ENCODE measurements at regions of chr14 and their contacts with region 1.

Region 1: DNA sequence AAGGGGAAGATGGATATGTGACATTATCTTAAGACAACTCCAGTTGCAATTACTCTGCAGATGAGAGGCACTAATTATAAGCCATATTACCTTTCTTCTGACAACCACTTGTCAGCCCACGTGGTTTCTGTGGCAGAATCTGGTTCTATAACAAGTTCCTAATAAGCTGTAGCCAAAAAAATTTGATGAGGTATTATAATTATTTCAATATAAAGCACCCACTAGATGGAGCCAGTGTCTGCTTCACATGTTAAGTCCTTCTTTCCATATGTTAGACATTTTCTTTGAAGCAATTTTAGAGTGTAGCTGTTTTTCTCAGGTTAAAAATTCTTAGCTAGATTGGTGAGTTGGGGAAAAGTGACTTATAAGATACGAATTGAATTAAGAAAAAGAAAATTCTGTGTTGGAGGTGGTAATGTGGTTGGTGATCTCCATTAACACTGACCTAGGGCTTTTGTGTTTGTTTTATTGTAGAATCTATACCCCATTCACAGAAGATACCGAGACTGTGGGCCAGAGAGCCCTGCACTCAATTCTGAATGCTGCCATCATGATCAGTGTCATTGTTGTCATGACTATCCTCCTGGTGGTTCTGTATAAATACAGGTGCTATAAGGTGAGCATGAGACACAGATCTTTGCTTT is 36.9 kb downstream of the PSEN1 start:
- DNase-seq: no peak
- ATAC-seq: peak in 1 of 4 donors; percentile 48
- H3K4me3 ChIP-seq: no peak overlapping the region
- H3K27ac ChIP-seq: no peak overlapping the region
- H3K4me1 ChIP-seq: peaks cover 2% of the 10 kb centered on the region
- H3K27me3 ChIP-seq: no peaks in the 10 kb centered on the region
- CTCF ChIP-seq: peak; percentile 57

Region 2: DNA sequence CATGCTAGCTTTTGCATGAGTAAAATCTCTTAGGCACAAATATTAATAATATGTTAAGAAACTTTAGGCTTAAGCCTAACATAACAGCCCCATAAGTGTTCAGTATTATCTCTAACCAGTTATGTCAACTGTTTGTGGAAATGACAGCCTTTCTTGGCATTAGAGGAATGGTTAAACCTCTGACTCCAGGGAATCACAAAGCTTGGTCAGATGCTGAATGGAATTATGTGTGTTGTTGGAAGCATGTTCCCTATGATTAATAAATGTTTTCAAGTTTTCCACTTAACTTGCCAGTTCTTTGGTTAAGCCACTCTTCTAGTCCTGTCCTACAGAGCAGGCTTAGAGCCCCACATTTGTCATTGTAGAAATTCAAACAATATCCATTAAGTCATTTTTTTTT is 19.9 kb before region 1 on chr14:
- intact Hi-C with region 1: no loop called
- DNase-seq: no peak
- ATAC-seq: no peak
- H3K4me3 ChIP-seq: no peak overlapping the region
- H3K27ac ChIP-seq: no peak overlapping the region
- H3K4me1 ChIP-seq: no peaks in the 10 kb centered on the region
- H3K27me3 ChIP-seq: no peaks in the 10 kb centered on the region
- CTCF ChIP-seq: no peak

Region 3: GRCh38 chr14:73269729-73270531 is 96.7 kb after region 1 on chr14:
- intact Hi-C with region 1: loop called in 1 of 2 experiments (anchors 10 kb)
- DNase-seq: peak; percentile 65 to 75
- ATAC-seq: peak; percentile 70 to 80 (median 75)
- H3K4me3 ChIP-seq: peak overlapping the region; percentile 61
- H3K27ac ChIP-seq: no peak overlapping the region
- H3K4me1 ChIP-seq: peaks cover 17% of the 10 kb centered on the region
- H3K27me3 ChIP-seq: peaks cover 0 to 4% (median 0%) of the 10 kb centered on the region in 3 donors
- CTCF ChIP-seq: no peak

Region 4: DNA sequence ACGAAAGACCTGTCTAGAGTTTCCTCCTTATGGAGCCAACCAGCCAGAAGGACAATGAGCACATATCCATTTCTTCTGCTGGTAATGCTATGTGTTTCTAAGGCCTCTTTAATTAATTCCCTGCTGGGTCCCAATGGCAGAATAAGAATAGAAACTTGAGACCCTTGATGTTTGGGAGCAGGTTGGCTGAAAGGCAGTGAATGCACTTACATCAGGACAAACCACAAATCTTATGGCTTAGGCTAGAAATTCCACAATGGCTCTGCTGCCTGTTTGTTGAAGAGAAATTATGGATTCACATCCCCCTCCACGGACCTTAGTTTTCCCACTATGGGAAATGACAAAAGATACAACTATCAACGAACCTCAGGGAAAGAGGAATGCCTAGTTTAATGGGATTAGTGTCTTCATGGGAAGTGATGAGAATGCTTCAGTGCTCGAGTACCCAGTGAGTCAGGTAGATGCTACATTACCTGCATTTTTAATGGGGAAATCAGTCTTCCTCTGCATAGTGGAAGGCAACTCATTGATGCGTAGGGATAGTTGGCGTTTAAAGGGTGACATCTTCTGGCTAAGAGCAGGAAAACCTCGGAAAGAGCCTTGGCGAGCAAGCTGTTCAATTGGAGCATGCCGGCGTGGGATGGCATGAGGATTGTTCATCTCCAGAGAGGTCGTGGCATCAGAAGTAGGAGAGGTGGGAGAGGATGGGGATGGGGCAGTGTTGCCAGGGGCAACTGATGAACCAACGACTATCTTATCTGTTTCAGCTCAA is 110.6 kb after region 1 on chr14:
- intact Hi-C with region 1: loop called (anchors 10 kb)
- DNase-seq: no peak
- ATAC-seq: no peak
- H3K4me3 ChIP-seq: no peak overlapping the region
- H3K27ac ChIP-seq: no peak overlapping the region
- H3K4me1 ChIP-seq: no peaks in the 10 kb centered on the region
- H3K27me3 ChIP-seq: no peaks in the 10 kb centered on the region
- CTCF ChIP-seq: no peak

Region 5: DNA sequence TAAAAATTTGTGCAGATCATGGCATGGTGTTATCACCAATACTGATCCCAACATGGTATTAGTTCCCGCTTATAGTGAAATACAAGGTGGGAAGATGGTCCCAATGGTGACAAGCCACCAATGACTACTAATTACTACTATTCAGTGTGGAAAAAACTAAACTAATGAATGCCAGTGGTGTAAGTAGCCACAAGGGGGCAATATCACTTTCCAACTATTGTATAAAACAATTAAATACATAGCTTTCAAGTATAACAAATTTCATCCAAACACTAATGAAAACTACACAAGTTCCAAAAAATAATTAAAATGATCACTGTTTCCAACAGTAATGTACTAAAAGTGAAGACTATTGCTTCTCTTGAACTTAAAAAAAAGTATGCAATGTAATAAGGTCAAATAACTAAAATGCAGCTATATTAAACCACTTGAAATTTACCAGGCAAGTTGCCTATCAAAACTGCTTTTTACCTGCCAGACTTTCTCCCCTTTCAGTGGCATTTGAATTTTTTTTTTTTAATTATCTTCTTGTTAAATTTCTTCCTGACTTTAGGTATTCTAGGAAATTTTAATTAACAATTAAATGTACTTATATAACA is 122.1 kb after region 1 on chr14:
- intact Hi-C with region 1: no loop called
- DNase-seq: no peak
- ATAC-seq: no peak
- H3K4me3 ChIP-seq: no peak overlapping the region
- H3K27ac ChIP-seq: no peak overlapping the region
- H3K4me1 ChIP-seq: no peaks in the 10 kb centered on the region
- H3K27me3 ChIP-seq: no peaks in the 10 kb centered on the region
- CTCF ChIP-seq: peak; percentile 67

Region 6: DNA sequence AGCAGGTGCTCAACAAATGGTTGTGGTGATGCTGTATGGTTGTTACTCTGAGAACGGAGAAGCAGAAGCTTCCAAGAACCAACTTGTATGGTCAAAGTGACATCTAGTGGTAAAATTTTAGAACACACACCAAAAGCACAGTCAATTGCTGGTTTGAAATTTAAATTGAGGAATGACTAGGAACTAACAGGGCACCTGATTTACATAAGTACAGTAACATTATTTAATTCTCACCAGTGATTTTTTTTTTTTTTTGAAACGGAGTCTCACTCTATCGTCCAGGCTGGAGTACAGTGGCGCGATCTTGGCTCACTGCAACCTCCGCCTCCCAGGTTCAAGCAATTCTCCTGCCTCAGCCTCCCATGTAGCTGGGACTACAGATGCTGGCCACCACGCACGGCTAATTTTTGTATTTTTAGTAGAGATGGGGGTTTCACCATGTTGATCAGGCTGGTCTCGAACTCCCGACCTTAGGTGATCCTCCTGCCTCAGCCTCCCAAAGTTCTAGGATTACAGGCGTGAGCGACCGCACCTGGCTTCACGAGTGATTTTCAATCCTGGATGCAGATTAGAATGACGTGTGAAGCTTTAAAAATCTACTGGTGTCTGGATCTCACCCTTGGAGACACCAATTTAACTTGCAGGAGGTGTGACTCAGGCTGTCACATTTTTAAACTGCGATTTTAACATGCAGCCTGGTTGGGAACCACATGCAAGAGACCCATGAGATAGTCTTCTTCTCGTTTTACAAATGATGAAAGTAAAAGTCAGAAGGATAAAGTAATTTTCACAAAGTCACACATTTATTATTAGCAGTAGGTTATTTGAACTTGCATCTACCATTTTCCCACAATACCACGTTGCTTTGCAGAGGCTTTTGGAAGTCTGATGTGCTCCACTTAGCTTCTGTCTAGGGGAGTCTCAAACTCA is 299.2 kb after region 1 on chr14:
- intact Hi-C with region 1: loop called (anchors 5 kb)
- DNase-seq: no peak
- ATAC-seq: peak; percentile 81 to 96 (median 85)
- H3K4me3 ChIP-seq: no peak overlapping the region
- H3K27ac ChIP-seq: no peak overlapping the region
- H3K4me1 ChIP-seq: no peaks in the 10 kb centered on the region
- H3K27me3 ChIP-seq: no peaks in the 10 kb centered on the region
- CTCF ChIP-seq: peak; percentile 80